RWPE1 (cell line): ENCODE measurements at regions of chr9 and their contacts with region 1.

Region 1: DNA sequence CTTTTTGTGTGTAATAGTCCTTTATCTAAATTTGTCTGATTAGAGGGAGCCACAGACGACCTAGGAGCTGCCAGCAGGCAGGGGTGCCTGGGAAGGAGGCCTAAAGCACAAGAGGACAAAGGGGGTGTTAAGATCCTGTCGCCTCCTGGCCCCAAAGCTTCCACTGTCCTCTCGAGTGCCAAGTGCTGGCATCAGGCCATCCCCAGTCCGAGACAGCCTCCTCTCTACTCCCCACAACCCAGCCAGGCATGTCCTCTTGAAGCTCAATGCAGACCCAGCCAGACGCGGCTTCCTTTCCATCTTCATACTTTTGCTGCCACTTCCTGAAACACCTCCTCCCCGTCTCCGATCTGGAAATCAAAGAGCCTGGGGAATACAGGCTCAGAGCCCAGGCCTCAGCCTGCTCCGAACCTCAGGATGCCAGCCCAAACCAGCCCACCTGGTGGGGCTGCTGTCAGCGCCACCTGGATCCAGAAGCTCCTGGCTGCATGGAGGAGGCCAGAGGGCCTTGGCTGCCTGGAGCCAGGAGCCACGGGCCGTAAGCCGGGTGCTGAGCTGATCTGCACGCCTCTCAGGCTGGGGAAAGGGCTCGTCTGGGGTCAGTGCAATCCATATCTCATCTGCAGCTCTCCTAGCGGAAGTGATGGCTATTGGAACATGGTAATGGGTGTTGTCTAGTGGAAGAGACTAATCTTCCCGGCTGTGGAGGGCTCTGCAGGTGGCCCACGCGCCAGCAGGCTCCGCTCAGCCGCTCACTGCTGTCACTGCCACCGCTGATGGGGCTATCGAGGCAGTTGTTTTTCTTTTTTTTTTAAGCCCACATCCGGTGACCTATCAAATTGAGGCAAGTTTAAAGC is 60.2 kb upstream of the FUBP3 start:
- DNase-seq: no peak
- H3K27ac ChIP-seq: no peak overlapping the region
- CTCF ChIP-seq: no peak

Region 2: DNA sequence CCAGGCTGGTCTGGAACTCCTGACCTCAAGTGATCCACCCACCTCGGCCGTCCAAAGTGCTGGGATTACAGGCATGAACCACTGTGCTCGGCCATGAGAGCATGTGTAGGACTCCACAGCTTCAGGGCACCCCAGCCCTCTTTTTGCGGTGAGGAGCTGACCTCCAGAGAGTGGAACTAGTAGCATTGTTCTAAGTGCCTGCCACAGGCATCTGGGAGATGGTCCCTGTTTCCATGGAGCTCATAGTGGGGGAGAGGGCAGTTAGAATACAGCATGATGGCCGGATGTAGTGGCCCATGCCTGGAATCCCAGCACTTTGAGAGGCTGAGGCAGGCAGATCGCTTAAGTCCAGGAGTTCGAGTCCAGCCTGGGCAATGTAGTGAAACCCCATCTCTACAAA is 70.4 kb before region 1 on chr9:
- CTCF ChIA-PET with region 1: no interaction called
- POLR2A ChIA-PET with region 1: interaction called, 15 read pairs
- DNase-seq: no peak
- H3K27ac ChIP-seq: peak overlapping the region; percentile 99
- CTCF ChIP-seq: no peak

Region 3: GRCh38 chr9:130535818-130536561 is 16.8 kb after region 1 on chr9:
- CTCF ChIA-PET with region 1: no interaction called
- POLR2A ChIA-PET with region 1: no interaction called
- DNase-seq: no peak
- H3K27ac ChIP-seq: peak overlapping the region; percentile 95
- CTCF ChIP-seq: no peak